Activated B cell treated with CpG ODN at 0.5 μM for 24 hours (primary cell): ENCODE measurements at regions of chr11 and their contacts with region 1.

Region 1: GRCh38 chr11:66480117-66480938 is at the start of gene DPP3:
- DNase-seq: peak; percentile 91
- ATAC-seq: peak; percentile 98
- H3K4me3 Mint-ChIP-seq: peak within 1 kb of the TSS; percentile 90
- H3K27ac Mint-ChIP-seq: peak within 1 kb of the TSS; percentile 87
- H3K4me1 Mint-ChIP-seq: peaks cover 22% of the 10 kb centered on the region
- H3K27me3 Mint-ChIP-seq: no peaks in the 10 kb centered on the region
- CTCF ChIP-seq: no peak
- total RNA-seq, gene DPP3: 62.2 and 63.3 TPM in 2 replicates

Region 2: GRCh38 chr11:66386171-66387069 is 93.9 kb before region 1 on chr11:
- CTCF ChIA-PET with region 1: interaction called, 11 read pairs
- POLR2A ChIA-PET with region 1: interaction called, 6 read pairs
- intact Hi-C with region 1: no loop called
- DNase-seq: peak; percentile 68
- ATAC-seq: peak; percentile 84
- H3K4me3 Mint-ChIP-seq: peak overlapping the region; percentile 17
- H3K27ac Mint-ChIP-seq: no peak overlapping the region
- H3K4me1 Mint-ChIP-seq: peaks cover 9% of the 10 kb centered on the region
- H3K27me3 Mint-ChIP-seq: no peaks in the 10 kb centered on the region
- CTCF ChIP-seq: no peak

Region 3: GRCh38 chr11:66421492-66422205 is 58.7 kb before region 1 on chr11:
- CTCF ChIA-PET with region 1: interaction called, 7 read pairs
- POLR2A ChIA-PET with region 1: interaction called, 18 read pairs
- intact Hi-C with region 1: no loop called
- DNase-seq: peak; percentile 83
- ATAC-seq: peak; percentile 92
- H3K4me3 Mint-ChIP-seq: no peak overlapping the region
- H3K27ac Mint-ChIP-seq: no peak overlapping the region
- H3K4me1 Mint-ChIP-seq: peaks cover 9% of the 10 kb centered on the region
- H3K27me3 Mint-ChIP-seq: peaks cover 29% of the 10 kb centered on the region
- CTCF ChIP-seq: no peak

Region 4: GRCh38 chr11:66438504-66439466 is 41.5 kb before region 1 on chr11 and contains the start of gene MRPL11:
- CTCF ChIA-PET with region 1: interaction called, 13 read pairs
- POLR2A ChIA-PET with region 1: interaction called, 32 read pairs
- intact Hi-C with region 1: loop called (anchors 1 kb)
- DNase-seq: peak; percentile 78
- ATAC-seq: peak; percentile 98
- H3K4me3 Mint-ChIP-seq: peak within 1 kb of the TSS; percentile 87
- H3K27ac Mint-ChIP-seq: peak within 1 kb of the TSS; percentile 97
- H3K4me1 Mint-ChIP-seq: peaks cover 8% of the 10 kb centered on the region
- H3K27me3 Mint-ChIP-seq: peaks cover 4% of the 10 kb centered on the region
- CTCF ChIP-seq: no peak
- total RNA-seq, gene MRPL11: 62.6 and 74.3 TPM in 2 replicates

Region 5: GRCh38 chr11:66466225-66467027 is 13.9 kb before region 1 on chr11 and contains the start of gene PELI3:
- CTCF ChIA-PET with region 1: interaction called, 19 read pairs
- POLR2A ChIA-PET with region 1: interaction called, 63 read pairs
- intact Hi-C with region 1: loop called (anchors 1 kb)
- DNase-seq: peak; percentile 92
- ATAC-seq: peak; percentile 92
- H3K4me3 Mint-ChIP-seq: peak within 1 kb of the TSS; percentile 88
- H3K27ac Mint-ChIP-seq: peak within 1 kb of the TSS; percentile 84
- H3K4me1 Mint-ChIP-seq: peaks cover 43% of the 10 kb centered on the region
- H3K27me3 Mint-ChIP-seq: no peaks in the 10 kb centered on the region
- CTCF ChIP-seq: no peak
- total RNA-seq, gene PELI3: 8.5 and 9.1 TPM in 2 replicates

Region 6: GRCh38 chr11:66545701-66546367 is 65.5 kb after region 1 on chr11 and contains the start of gene ZDHHC24:
- CTCF ChIA-PET with region 1: no interaction called
- POLR2A ChIA-PET with region 1: interaction called, 17 read pairs
- intact Hi-C with region 1: loop called (anchors 1 kb)
- DNase-seq: peak; percentile 86
- ATAC-seq: peak; percentile 85
- H3K4me3 Mint-ChIP-seq: peak within 1 kb of the TSS; percentile 77
- H3K27ac Mint-ChIP-seq: peak within 1 kb of the TSS; percentile 57
- H3K4me1 Mint-ChIP-seq: peaks cover 35% of the 10 kb centered on the region
- H3K27me3 Mint-ChIP-seq: no peaks in the 10 kb centered on the region
- CTCF ChIP-seq: no peak
- total RNA-seq, gene ZDHHC24: 14.6 and 19.0 TPM in 2 replicates

Region 7: DNA sequence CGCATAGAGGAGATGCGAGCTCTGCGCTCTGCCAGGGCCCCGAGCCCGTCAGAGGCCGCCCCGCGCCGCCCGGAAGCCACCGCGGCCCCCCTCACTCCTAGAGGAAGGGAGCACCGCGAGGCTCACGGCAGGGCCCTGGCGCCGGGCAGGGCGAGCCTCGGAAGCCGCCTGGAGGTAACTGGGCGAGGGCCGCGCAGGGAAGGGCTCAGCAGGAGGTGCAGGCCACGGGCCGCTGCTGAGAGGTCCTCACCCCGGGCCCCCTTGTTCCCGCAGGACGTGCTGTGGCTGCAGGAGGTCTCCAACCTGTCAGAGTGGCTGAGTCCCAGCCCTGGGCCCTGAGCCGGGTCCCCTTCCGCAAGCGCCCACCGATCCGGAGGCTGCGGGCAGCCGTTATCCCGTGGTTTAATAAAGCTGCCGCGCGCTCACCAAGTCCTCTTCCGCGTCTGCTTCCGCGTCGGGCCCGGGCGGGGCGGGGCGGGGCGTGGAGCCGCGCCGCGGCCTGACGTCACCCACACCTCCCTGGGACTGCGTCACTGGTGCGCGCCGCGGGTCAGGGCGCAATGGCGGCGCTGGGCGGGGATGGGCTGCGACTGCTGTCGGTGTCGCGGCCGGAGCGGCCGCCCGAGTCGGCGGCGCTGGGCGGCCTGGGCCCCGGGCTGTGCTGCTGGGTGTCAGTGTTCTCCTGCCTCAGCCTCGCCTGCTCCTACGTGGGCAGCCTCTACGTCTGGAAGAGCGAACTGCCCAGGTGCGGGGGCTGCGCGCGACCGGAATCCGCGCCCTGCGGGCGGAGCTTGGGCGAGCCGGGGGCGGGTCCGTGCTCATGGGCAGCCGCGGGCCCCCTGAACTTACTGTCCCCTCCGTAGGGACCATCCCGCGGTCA is 362.8 kb after region 1 on chr11 and contains the start of gene RCE1:
- CTCF ChIA-PET with region 1: no interaction called
- POLR2A ChIA-PET with region 1: interaction called, 10 read pairs
- intact Hi-C with region 1: no loop called
- DNase-seq: peak; percentile 93
- ATAC-seq: peak; percentile 91
- H3K4me3 Mint-ChIP-seq: peak within 1 kb of the TSS; percentile 92
- H3K27ac Mint-ChIP-seq: peak within 1 kb of the TSS; percentile 90
- H3K4me1 Mint-ChIP-seq: peaks cover 45% of the 10 kb centered on the region
- H3K27me3 Mint-ChIP-seq: no peaks in the 10 kb centered on the region
- CTCF ChIP-seq: no peak
- total RNA-seq, gene RCE1: 20.1 and 21.4 TPM in 2 replicates